Caco-2 (cell line): ENCODE measurements at regions of chr11 and their contacts with region 1.

Region 1: DNA sequence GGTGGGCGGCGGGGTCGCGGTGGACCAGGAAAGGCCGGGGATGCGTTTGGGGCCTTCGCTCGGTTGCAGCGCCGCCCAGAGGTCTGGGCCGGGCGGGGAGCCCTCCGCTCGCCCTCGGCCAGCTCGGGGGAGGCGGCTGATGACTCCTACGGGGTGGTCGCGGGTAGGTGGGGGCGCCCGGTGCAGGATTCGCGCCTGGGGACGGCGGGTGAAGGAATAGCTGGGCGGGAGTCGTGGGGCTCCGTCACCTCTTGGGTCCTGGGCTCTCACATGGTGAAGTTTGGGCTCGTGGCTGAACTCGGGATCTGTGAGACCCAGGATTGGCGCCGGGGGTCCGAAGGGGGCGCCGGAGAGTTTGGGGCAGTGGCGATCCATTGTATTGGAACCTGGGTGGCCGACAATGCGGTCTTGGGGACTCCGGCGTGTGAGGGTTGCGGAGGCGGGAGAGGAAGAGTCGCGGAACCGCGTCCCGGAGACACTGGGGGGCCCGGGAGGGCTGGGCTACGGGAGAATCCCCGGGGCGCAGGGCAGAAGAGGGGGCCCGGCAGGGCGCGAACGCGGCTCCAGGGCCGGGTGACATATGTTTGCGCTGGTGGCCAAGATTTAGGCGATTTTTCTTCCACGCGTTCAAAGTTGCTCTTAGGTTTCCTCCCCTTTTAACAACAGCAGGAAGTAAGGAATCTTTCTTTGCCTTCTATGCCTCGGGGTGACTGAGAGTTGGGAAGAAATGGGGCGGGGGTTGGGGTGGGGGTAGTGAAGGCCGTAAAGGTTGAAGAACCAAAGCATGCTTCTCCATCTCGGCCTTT is 935 bp downstream of the QSER1 start:
- DNase-seq: peak; percentile 65 to 79
- H3K4me3 ChIP-seq: peak overlapping the region; percentile 96
- H3K4me3 Mint-ChIP-seq: peak overlapping the region; percentile 91
- H3K27ac Mint-ChIP-seq: peak overlapping the region; percentile 88
- H3K4me1 ChIP-seq: peaks cover 23% of the 10 kb centered on the region
- H3K4me1 Mint-ChIP-seq: peaks cover 18% of the 10 kb centered on the region
- H3K27me3 ChIP-seq: no peaks in the 10 kb centered on the region
- H3K27me3 Mint-ChIP-seq: no peaks in the 10 kb centered on the region
- CTCF ChIP-seq: peak; percentile 44 to 65

Region 2: DNA sequence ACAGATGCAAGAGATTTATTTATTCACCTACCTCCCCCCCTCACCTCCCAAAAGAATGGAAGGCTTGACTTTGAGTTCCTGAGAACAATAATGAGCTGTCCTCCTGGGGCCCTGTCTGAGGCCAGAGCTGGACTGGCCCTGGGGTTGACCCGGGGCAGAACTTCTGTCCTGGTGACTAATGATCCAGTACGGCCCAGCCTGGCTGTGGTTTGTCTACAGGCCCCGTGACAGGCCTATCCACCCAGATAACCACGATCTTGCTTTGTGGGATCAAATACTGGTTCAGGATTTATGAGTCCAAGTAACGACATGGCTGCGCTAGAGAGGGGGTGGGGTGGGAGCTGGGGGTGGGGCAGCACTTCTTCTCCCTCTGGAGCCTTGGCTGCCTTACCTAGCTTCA is 539.7 kb before region 1 on chr11:
- CTCF ChIA-PET with region 1: no interaction called
- POLR2A ChIA-PET with region 1: interaction called, 19 read pairs
- intact Hi-C with region 1: no loop called
- DNase-seq: no peak
- H3K4me3 ChIP-seq: no peak overlapping the region
- H3K4me3 Mint-ChIP-seq: no peak overlapping the region
- H3K27ac Mint-ChIP-seq: no peak overlapping the region
- H3K4me1 ChIP-seq: no peaks in the 10 kb centered on the region
- H3K4me1 Mint-ChIP-seq: no peaks in the 10 kb centered on the region
- H3K27me3 ChIP-seq: no peaks in the 10 kb centered on the region; the same call in 1 of the 2 replicates
- H3K27me3 Mint-ChIP-seq: peaks cover 9% of the 10 kb centered on the region
- CTCF ChIP-seq: no peak

Region 3: DNA sequence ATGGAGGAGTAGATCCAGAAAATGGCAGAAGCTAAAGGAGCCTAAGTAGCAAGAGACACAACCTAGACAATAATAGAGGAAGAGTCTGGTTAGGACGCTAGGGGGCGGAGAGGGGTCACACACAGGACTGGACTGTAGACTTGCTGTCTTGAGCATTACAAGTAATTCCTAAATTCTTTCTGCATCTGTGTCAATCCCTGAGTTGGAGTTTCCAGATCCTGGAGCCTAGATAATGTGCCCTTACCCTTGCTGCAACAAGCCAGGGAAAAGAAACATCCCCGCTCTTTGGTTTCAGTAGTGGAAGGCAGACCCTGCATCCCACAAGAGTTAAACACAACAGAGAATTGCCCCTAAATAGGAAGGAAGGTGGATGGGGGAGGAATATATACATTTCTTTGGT is 84.2 kb before region 1 on chr11:
- CTCF ChIA-PET with region 1: interaction called, 5 read pairs
- POLR2A ChIA-PET with region 1: no interaction called
- intact Hi-C with region 1: loop called (anchors 2 kb)
- DNase-seq: peak; percentile 80 to 83
- H3K4me3 ChIP-seq: no peak overlapping the region
- H3K4me3 Mint-ChIP-seq: no peak overlapping the region
- H3K27ac Mint-ChIP-seq: no peak overlapping the region
- H3K4me1 ChIP-seq: no peaks in the 10 kb centered on the region
- H3K4me1 Mint-ChIP-seq: no peaks in the 10 kb centered on the region
- H3K27me3 ChIP-seq: no peaks in the 10 kb centered on the region
- H3K27me3 Mint-ChIP-seq: peaks cover 4% of the 10 kb centered on the region
- CTCF ChIP-seq: peak; percentile 87 to 96

Region 4: GRCh38 chr11:32918427-32918826 is 24.9 kb after region 1 on chr11:
- CTCF ChIA-PET with region 1: interaction called, 3 read pairs
- POLR2A ChIA-PET with region 1: interaction called, 6 read pairs
- intact Hi-C with region 1: loop called (anchors 1 kb)
- DNase-seq: no peak
- H3K4me3 ChIP-seq: no peak overlapping the region
- H3K4me3 Mint-ChIP-seq: peak overlapping the region; percentile 33
- H3K27ac Mint-ChIP-seq: peak overlapping the region; percentile 78
- H3K4me1 ChIP-seq: peaks cover 34% of the 10 kb centered on the region
- H3K4me1 Mint-ChIP-seq: peaks cover 29% of the 10 kb centered on the region
- H3K27me3 ChIP-seq: no peaks in the 10 kb centered on the region
- H3K27me3 Mint-ChIP-seq: no peaks in the 10 kb centered on the region
- CTCF ChIP-seq: no peak

Region 5: GRCh38 chr11:33257897-33258630 is 364.5 kb after region 1 on chr11:
- CTCF ChIA-PET with region 1: no interaction called
- POLR2A ChIA-PET with region 1: no interaction called
- intact Hi-C with region 1: loop called (anchors 5 kb)
- DNase-seq: peak; percentile 86
- H3K4me3 ChIP-seq: peak overlapping the region; percentile 90
- H3K4me3 Mint-ChIP-seq: peak overlapping the region; percentile 96
- H3K27ac Mint-ChIP-seq: peak overlapping the region; percentile 97
- H3K4me1 ChIP-seq: peaks cover 14% of the 10 kb centered on the region
- H3K4me1 Mint-ChIP-seq: peaks cover 20% of the 10 kb centered on the region
- H3K27me3 ChIP-seq: no peaks in the 10 kb centered on the region
- H3K27me3 Mint-ChIP-seq: no peaks in the 10 kb centered on the region
- CTCF ChIP-seq: peak in 1 of 2 experiments; percentile 39